B cell (primary cell): ENCODE measurements at regions of chr6 and their contacts with region 1.

Region 1: GRCh38 chr6:109440331-109441068 is at the starts of genes PPIL6 and SMPD2:
- DNase-seq: peak; percentile 94
- ATAC-seq: peak; percentile 87
- H3K4me3 ChIP-seq: peak within 1 kb of the TSS; percentile 0 to 93 (median 90)
- H3K4me3 Mint-ChIP-seq: peak within 1 kb of the TSS; percentile 97
- H3K27ac ChIP-seq: peak within 1 kb of the TSS; percentile 79 to 98
- H3K27ac Mint-ChIP-seq: peak within 1 kb of the TSS; percentile 96
- H3K4me1 ChIP-seq: peaks cover 21 to 30% of the 10 kb centered on the region in 2 donors
- H3K4me1 Mint-ChIP-seq: peaks cover 31% of the 10 kb centered on the region
- H3K27me3 ChIP-seq: no peaks in the 10 kb centered on the region
- H3K27me3 Mint-ChIP-seq: no peaks in the 10 kb centered on the region
- CTCF ChIP-seq: no peak
- total RNA-seq, gene PPIL6: 0.53 and 1.8 TPM in 2 replicates
- total RNA-seq, gene SMPD2: 35.7 and 36.4 TPM in 2 replicates

Region 2: GRCh38 chr6:109336221-109336961 is 104.1 kb before region 1 on chr6:
- CTCF ChIA-PET with region 1: no interaction called
- POLR2A ChIA-PET with region 1: no interaction called
- intact Hi-C with region 1: no loop called
- DNase-seq: no peak
- ATAC-seq: no peak
- H3K4me3 ChIP-seq: no peak overlapping the region
- H3K4me3 Mint-ChIP-seq: no peak overlapping the region
- H3K27ac ChIP-seq: no peak overlapping the region
- H3K27ac Mint-ChIP-seq: no peak overlapping the region
- H3K4me1 ChIP-seq: peaks cover 0 to 4% of the 10 kb centered on the region in 2 donors
- H3K4me1 Mint-ChIP-seq: no peaks in the 10 kb centered on the region
- H3K27me3 ChIP-seq: no peaks in the 10 kb centered on the region
- H3K27me3 Mint-ChIP-seq: no peaks in the 10 kb centered on the region
- CTCF ChIP-seq: no peak

Region 3: GRCh38 chr6:109477725-109478124 is 37.2 kb after region 1 on chr6:
- CTCF ChIA-PET with region 1: interaction called, 12 read pairs
- POLR2A ChIA-PET with region 1: interaction called, 8 read pairs
- intact Hi-C with region 1: no loop called
- DNase-seq: no peak
- ATAC-seq: no peak
- H3K4me3 ChIP-seq: peak overlapping the region in 3 of 5 experiments; percentile 12 to 47 (median 34)
- H3K4me3 Mint-ChIP-seq: peak overlapping the region; percentile 86
- H3K27ac ChIP-seq: peak overlapping the region in 1 of 2 donors; percentile 81
- H3K27ac Mint-ChIP-seq: peak overlapping the region; percentile 84
- H3K4me1 ChIP-seq: peaks cover 58 to 68% of the 10 kb centered on the region in 2 donors
- H3K4me1 Mint-ChIP-seq: peaks cover 80% of the 10 kb centered on the region
- H3K27me3 ChIP-seq: no peaks in the 10 kb centered on the region
- H3K27me3 Mint-ChIP-seq: no peaks in the 10 kb centered on the region
- CTCF ChIP-seq: no peak

Region 4: DNA sequence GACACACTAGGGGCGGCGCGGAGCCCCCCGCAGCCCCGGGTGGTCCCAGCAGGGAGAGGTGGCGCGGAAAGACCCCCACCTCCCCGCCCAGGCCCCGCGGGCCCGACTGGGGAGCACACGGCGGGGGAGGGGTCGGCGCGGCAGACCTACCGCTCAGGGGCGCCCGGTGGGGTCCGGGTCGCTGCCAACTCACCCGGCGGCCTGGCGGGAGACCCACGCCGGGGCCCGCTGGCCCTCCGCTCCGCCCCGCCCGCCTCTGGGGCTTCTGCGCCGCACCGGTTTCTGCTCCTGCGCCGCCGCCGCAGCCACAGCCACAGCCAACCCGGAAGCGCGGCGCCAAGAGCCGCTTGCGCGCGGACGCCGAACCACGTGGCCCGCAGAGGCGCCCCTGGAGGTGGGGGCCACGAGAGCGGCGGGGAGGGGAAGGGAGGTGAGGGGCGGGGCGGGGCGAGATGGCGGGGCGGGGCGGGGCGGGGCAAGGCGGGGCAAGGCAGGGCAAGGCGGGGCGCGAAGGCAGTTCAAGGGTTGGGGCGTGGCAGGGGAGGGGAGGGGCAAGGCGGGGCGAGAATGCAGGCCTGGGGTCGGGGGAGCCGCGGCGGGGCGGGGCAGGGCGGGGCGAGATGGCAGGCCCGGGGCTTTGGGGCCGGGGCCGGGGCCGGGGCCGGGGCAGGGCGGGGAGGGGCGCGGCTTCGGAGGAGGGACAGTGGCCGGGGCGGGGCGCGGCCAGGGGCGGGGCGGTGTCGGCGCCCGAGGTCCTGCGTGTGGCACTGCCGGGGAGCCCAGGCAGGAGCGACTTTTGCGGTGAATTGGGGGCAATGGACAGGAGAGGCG is 42.6 kb after region 1 on chr6 and contains the start of gene ZBTB24:
- CTCF ChIA-PET with region 1: interaction called, 12 read pairs
- POLR2A ChIA-PET with region 1: interaction called, 8 read pairs
- intact Hi-C with region 1: loop called (anchors 1 kb)
- DNase-seq: peak; percentile 93
- ATAC-seq: peak; percentile 83
- H3K4me3 ChIP-seq: peak within 1 kb of the TSS; percentile 76 to 97 (median 94)
- H3K4me3 Mint-ChIP-seq: peak within 1 kb of the TSS; percentile 96
- H3K27ac ChIP-seq: peak within 1 kb of the TSS; percentile 65 to 81
- H3K27ac Mint-ChIP-seq: peak within 1 kb of the TSS; percentile 89
- H3K4me1 ChIP-seq: peaks cover 40 to 57% of the 10 kb centered on the region in 2 donors
- H3K4me1 Mint-ChIP-seq: peaks cover 50% of the 10 kb centered on the region
- H3K27me3 ChIP-seq: no peaks in the 10 kb centered on the region
- H3K27me3 Mint-ChIP-seq: no peaks in the 10 kb centered on the region
- CTCF ChIP-seq: no peak
- total RNA-seq, gene ZBTB24: 31.4 and 32.9 TPM in 2 replicates

Region 5: DNA sequence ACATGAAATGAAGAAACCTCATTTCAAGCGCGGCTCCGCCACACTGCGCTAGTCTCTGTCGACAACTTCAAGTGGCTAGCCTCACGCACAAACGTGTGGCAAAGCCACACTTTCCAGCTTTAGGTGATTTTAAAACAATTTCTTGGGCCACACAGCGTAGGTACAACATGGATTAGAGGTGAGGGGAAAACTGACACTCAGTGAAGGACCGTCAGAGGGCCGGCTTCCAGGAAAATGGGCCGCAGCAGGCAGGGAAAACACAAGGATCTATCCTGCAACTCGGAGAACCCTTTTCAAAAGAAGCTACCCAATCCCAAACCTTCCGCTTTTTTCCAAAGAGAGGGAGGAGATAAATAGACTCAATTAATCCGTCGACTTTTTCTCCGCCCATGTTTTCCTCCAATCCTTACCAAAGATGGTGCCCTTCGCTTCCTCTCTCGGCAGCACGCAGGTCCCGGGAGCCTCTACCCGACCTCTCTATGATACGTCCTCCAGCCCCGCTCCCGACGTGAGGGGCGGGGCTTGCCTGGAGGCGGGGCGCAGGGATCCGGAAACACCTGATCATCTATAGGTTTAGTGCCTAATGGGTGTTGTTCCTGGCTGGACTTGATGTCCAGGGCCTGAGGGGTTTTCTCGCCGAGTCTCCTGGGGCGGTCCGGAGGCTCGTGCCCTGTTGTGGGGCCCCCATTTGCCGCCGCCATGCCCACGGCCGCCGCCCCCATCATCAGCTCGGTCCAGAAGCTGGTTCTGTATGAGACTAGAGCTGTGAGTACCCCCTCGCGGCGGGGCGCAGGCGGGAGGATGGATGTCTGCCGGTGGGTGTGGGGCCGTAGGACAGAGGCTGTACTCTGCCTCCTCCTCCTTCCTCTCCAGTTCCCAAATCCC is 250.5 kb after region 1 on chr6 and contains the starts of genes AK9 and FIG4:
- CTCF ChIA-PET with region 1: interaction called, 3 read pairs
- POLR2A ChIA-PET with region 1: interaction called, 9 read pairs
- intact Hi-C with region 1: loop called (anchors 1 kb)
- DNase-seq: peak; percentile 91
- ATAC-seq: peak; percentile 92
- H3K4me3 ChIP-seq: peak within 1 kb of the TSS; percentile 82 to 99 (median 93)
- H3K4me3 Mint-ChIP-seq: peak within 1 kb of the TSS; percentile 90
- H3K27ac ChIP-seq: peak within 1 kb of the TSS; percentile 77 to 93
- H3K27ac Mint-ChIP-seq: peak within 1 kb of the TSS; percentile 99
- H3K4me1 ChIP-seq: peaks cover 26 to 29% of the 10 kb centered on the region in 2 donors
- H3K4me1 Mint-ChIP-seq: peaks cover 39% of the 10 kb centered on the region
- H3K27me3 ChIP-seq: no peaks in the 10 kb centered on the region
- H3K27me3 Mint-ChIP-seq: no peaks in the 10 kb centered on the region
- CTCF ChIP-seq: peak; percentile 26
- total RNA-seq, gene AK9: 26.5 and 27.1 TPM in 2 replicates
- total RNA-seq, gene FIG4: 31.5 and 32.8 TPM in 2 replicates

Region 6: DNA sequence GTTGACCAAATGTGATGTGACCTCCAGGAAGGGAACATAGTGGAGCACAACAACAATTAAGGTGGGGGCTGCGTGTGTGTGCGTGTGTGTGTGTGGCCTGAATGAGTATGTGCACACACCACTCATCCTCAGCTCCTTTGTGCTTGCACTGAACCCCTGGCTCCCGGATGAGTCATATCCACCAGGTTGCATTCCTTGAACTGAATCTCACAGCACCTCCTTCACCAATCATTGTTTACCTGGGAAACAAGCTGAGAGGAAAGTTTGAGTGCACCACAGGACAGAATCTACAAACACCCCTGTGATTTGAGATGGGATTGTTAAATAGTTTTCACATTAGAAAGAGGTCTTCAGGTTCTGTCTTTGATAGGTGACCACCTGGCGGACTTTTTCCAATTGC is 503.9 kb after region 1 on chr6:
- CTCF ChIA-PET with region 1: no interaction called
- POLR2A ChIA-PET with region 1: no interaction called
- intact Hi-C with region 1: no loop called
- DNase-seq: no peak
- ATAC-seq: no peak
- H3K4me3 ChIP-seq: no peak overlapping the region
- H3K4me3 Mint-ChIP-seq: no peak overlapping the region
- H3K27ac ChIP-seq: no peak overlapping the region
- H3K27ac Mint-ChIP-seq: no peak overlapping the region
- H3K4me1 ChIP-seq: no peaks in the 10 kb centered on the region
- H3K4me1 Mint-ChIP-seq: no peaks in the 10 kb centered on the region
- H3K27me3 ChIP-seq: no peaks in the 10 kb centered on the region
- H3K27me3 Mint-ChIP-seq: peaks cover 41% of the 10 kb centered on the region
- CTCF ChIP-seq: no peak